ENCODE measurements at regions of chr18 and their contacts with region 1.

Region 1: GRCh38 chr18:9193031-9193430 is 56.5 kb downstream of the ANKRD12 start:
- DNase-seq: no peak
- ATAC-seq: peak in 1 of 4 experiments; percentile 13
- H3K4me3 ChIP-seq: no peak overlapping the region
- H3K4me3 Mint-ChIP-seq: peak overlapping the region in 1 of 3 donors; percentile 23
- H3K27ac ChIP-seq: no peak overlapping the region
- H3K27ac Mint-ChIP-seq: peak overlapping the region in 1 of 2 donors; percentile 22
- H3K4me1 ChIP-seq: no peaks in the 10 kb centered on the region
- H3K4me1 Mint-ChIP-seq: peaks cover 40 to 45% (median 41%) of the 10 kb centered on the region in 3 donors
- H3K27me3 ChIP-seq: no peaks in the 10 kb centered on the region
- H3K27me3 Mint-ChIP-seq: no peaks in the 10 kb centered on the region

Region 2: DNA sequence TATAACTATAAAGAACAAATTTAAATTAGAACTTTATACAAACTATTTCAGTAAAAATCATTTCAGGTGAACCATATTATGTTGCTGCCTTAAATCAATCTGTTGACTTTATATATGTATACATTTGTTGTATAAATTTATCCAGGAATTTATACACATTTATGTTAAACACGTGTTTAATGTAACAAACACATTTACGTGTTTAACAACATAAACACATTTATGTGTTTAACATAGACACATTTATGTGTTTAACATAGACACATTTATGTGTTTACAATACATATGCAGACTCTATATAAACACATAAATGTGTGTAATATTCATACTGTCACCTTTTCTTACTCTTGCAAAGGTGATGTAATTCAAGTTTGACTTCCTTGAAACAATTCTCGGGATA is 66.1 kb after region 1 on chr18:
- CTCF ChIA-PET with region 1: no interaction called
- POLR2A ChIA-PET with region 1: no interaction called
- DNase-seq: no peak
- ATAC-seq: no peak
- H3K4me3 ChIP-seq: no peak overlapping the region
- H3K4me3 Mint-ChIP-seq: no peak overlapping the region
- H3K27ac ChIP-seq: no peak overlapping the region
- H3K27ac Mint-ChIP-seq: no peak overlapping the region
- H3K4me1 ChIP-seq: no peaks in the 10 kb centered on the region
- H3K4me1 Mint-ChIP-seq: peaks cover 8 to 23% (median 11%) of the 10 kb centered on the region in 3 donors
- H3K27me3 ChIP-seq: no peaks in the 10 kb centered on the region
- H3K27me3 Mint-ChIP-seq: no peaks in the 10 kb centered on the region

Region 3: GRCh38 chr18:9719421-9719981 is 526.5 kb after region 1 on chr18:
- CTCF ChIA-PET with region 1: no interaction called
- POLR2A ChIA-PET with region 1: no interaction called
- DNase-seq: no peak
- ATAC-seq: no peak
- H3K4me3 ChIP-seq: no peak overlapping the region
- H3K4me3 Mint-ChIP-seq: no peak overlapping the region
- H3K27ac ChIP-seq: no peak overlapping the region
- H3K27ac Mint-ChIP-seq: no peak overlapping the region
- H3K4me1 ChIP-seq: no peaks in the 10 kb centered on the region
- H3K4me1 Mint-ChIP-seq: no peaks in the 10 kb centered on the region
- H3K27me3 ChIP-seq: peaks cover 0 to 18% of the 10 kb centered on the region in 2 experiments
- H3K27me3 Mint-ChIP-seq: peaks cover 30 to 34% of the 10 kb centered on the region in 2 donors

Region 4: DNA sequence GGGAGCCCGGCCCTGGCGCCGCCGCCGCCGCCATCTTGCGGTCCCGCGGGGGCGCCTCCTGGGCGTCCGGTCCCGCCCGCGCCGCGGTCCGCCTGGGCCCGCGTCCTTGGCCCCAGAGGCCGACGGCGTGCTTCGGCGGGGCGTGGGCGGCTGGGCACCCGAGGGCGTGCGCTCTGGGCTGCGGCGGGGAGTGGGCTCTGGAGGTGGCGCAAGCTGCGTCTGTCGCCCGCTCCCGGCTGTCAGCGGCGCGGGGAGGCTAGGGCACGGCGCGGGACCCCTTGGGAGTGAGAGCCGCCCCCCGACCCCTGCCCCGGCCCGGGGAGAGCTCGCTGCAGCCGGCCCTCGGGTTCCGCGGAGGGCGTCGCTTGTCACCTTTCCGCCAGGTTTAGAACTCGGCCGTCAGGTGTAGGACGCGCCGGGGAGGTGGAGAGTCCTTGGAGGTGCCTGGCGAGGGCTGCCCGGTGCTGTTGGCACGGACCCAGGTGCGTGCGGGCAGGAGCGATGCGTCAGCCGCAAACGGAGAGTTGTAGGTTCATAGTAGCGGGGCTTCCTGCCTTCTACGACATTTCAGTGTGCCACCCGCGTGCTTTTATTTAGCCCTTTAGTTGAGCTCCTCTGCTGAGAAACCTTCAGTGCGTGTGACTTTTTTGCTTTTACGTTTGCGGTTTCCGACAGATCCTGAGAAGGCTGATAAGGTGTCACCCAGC is 721.7 kb after region 1 on chr18:
- CTCF ChIA-PET with region 1: no interaction called
- POLR2A ChIA-PET with region 1: interaction called in 1 of 2 experiments, 10 read pairs
- DNase-seq: peak; percentile 46 to 90 (median 73)
- ATAC-seq: peak; percentile 21 to 36 (median 34)
- H3K4me3 ChIP-seq: peak overlapping the region; percentile 63 to 81
- H3K4me3 Mint-ChIP-seq: peak overlapping the region; percentile 88 to 89 (median 89)
- H3K27ac ChIP-seq: peak overlapping the region; percentile 87
- H3K27ac Mint-ChIP-seq: peak overlapping the region; percentile 90 to 92
- H3K4me1 ChIP-seq: peaks cover 22 to 36% of the 10 kb centered on the region in 2 experiments
- H3K4me1 Mint-ChIP-seq: peaks cover 26 to 31% (median 27%) of the 10 kb centered on the region in 3 donors
- H3K27me3 ChIP-seq: no peaks in the 10 kb centered on the region
- H3K27me3 Mint-ChIP-seq: no peaks in the 10 kb centered on the region

Measured in T-cell (primary cell).